ENCODE measurements at regions of chr7 and their contacts with region 1.

Region 1: DNA sequence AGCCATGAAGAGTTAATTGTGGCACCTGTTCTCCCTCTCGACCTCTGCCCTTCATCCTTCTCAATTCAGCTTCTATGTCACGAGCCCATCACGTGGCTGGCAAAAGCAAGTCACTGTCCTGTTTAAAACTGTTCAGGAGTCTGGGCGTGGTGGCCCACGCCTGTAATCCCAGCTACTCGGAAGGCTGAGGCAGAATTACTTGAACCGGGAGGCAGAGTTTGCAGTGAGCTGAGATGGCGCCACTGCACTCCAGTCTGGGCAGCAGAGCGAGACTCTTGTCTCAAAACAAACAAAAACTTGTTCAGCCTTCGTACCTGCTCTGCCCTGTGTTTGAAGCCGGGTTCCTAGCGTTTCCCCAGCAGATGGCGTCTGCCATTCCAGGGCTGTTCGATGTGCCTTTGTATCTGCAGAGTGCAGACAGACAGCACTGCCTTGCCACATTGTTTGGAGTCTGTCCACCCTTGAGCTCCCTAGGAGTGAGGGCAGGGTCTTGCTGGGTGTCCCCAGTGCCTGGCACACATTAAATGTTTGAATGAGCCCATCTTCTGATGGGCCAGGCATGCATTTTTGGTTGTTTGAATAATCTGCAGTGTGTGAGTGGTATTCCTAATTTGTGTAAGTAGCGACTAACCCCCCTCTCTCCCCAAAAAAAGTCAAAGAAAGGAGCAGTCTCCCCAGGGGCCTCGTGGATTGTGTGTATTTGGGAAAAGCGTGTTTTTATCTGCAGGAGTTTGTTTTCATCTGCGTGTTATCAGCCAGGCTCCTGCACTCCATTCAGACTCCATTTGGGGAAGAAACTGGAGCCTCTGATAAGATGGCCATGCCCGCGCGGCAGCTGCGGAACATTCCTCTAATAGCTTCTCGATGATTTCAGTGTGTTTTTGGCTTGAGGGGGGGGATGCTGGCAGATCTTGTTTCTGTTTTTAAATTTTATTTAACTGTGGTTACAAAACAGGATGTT is 61.2 kb downstream of the DNAJB6 start:
- DNase-seq: peak; percentile 85

Region 2: GRCh38 chr7:157228864-157229422 is 169.1 kb before region 1 on chr7:
- CTCF ChIA-PET with region 1: no interaction called
- POLR2A ChIA-PET with region 1: no interaction called
- DNase-seq: peak; percentile 68

Region 3: DNA sequence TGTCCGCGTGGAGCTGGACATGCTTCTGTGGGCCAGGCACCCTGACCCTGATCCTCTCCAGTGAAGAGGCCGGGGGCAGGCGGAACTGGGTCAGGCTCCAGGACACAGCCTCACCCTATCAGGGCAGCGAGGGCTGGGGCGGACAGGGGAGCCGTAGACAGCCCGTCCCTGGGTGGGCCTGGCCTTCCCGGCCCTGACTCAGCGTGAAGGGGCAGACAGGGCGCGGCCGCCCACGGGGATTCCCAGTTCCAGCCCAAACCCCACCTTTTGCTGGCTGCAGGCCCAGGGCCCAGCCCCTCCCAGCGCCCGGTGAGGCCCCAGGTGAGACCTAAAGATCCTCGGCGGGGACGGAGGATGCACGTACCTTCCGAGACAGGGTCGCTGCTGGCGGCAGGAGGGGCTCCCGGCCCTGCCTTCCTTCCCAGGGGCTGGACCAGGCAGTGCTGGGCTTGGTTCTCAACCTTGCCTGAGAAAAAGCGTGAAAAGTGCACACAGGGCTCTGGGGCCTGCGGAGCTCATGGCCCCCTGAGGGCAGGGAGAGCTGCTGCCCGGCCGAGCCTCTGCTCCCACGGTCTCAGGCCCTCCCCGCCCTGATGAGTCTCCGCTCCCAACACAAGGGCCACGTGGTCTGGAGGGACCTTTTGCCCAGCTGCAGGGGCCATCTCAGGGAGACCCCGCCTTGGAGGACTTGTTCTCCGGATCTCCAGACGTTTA is 105.2 kb before region 1 on chr7:
- CTCF ChIA-PET with region 1: no interaction called
- POLR2A ChIA-PET with region 1: no interaction called
- DNase-seq: no peak

Region 4: GRCh38 chr7:157386979-157387800 is 10.8 kb before region 1 on chr7:
- CTCF ChIA-PET with region 1: interaction called, 19 read pairs
- POLR2A ChIA-PET with region 1: no interaction called
- DNase-seq: peak; percentile 97

Region 5: GRCh38 chr7:157412541-157413480 is 14.8 kb after region 1 on chr7:
- CTCF ChIA-PET with region 1: no interaction called
- POLR2A ChIA-PET with region 1: no interaction called
- DNase-seq: no peak